Colonic mucosa (tissue), 4 donors: ENCODE measurements at regions of chr12 and their contacts with region 1.

Region 1: GRCh38 chr12:64923536-64923935 is 99.1 kb downstream of the TBC1D30 start:
- DNase-seq: no peak
- H3K4me3 ChIP-seq: no peak overlapping the region
- H3K27ac ChIP-seq: no peak overlapping the region
- H3K4me1 ChIP-seq: no peaks in the 10 kb centered on the region
- H3K27me3 ChIP-seq: no peaks in the 10 kb centered on the region
- CTCF ChIP-seq: no peak

Region 2: DNA sequence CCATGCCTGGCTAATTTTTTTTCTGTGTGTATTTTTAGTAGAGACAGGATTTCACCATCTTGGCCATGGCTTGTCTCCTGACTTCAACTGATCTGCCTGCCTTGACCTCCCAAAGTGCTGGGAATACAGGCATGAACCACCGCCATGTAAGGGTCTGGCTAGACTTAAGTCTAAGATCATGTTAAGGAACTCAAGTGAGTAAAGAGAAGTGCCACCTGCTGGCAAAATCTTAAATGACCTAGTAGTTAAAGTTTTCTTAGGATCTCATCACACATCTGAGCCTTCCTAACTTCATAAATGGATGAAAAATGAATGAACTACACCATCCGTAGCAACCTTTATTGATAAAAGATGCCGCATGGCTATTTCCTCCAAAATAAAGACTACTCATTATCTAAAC is 531.3 kb before region 1 on chr12:
- intact Hi-C with region 1: no loop called
- DNase-seq: no peak
- H3K4me3 ChIP-seq: no peak overlapping the region
- H3K27ac ChIP-seq: no peak overlapping the region
- H3K4me1 ChIP-seq: no peaks in the 10 kb centered on the region
- H3K27me3 ChIP-seq: peaks cover 12% of the 10 kb centered on the region
- CTCF ChIP-seq: no peak

Region 3: GRCh38 chr12:64968989-64969735 is 45.6 kb after region 1 on chr12:
- intact Hi-C with region 1: loop called (anchors 5 kb)
- DNase-seq: no peak
- H3K4me3 ChIP-seq: no peak overlapping the region
- H3K27ac ChIP-seq: no peak overlapping the region
- H3K4me1 ChIP-seq: no peaks in the 10 kb centered on the region
- H3K27me3 ChIP-seq: no peaks in the 10 kb centered on the region
- CTCF ChIP-seq: no peak

Region 4: DNA sequence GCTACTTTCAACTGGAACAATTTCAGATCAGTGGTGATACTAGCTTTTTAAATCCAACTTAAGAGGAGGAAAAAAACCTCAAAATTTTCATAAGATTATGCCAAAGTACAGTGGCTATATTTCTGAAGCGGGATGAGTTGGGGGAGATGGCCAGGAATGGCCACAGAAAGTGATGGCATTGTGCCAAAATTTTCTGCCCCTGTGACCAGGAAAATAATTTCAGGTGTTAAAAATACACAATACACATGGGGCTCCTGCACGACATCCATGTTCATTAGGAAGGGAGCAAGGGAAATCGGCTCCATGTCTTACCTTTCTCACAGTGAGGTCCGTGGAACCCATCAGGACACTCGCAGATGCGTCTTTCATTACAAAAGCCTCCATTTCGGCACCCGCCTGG is 143.8 kb after region 1 on chr12:
- intact Hi-C with region 1: no loop called
- DNase-seq: no peak
- H3K4me3 ChIP-seq: no peak overlapping the region
- H3K27ac ChIP-seq: no peak overlapping the region
- H3K4me1 ChIP-seq: no peaks in the 10 kb centered on the region
- H3K27me3 ChIP-seq: no peaks in the 10 kb centered on the region
- CTCF ChIP-seq: no peak